Activated naive CD4-positive, alpha-beta T cell treated with anti-CD3 and anti-CD28 coated beads for 36 hours (primary cell): ENCODE measurements at regions of chr14 and their contacts with region 1.

Region 1: DNA sequence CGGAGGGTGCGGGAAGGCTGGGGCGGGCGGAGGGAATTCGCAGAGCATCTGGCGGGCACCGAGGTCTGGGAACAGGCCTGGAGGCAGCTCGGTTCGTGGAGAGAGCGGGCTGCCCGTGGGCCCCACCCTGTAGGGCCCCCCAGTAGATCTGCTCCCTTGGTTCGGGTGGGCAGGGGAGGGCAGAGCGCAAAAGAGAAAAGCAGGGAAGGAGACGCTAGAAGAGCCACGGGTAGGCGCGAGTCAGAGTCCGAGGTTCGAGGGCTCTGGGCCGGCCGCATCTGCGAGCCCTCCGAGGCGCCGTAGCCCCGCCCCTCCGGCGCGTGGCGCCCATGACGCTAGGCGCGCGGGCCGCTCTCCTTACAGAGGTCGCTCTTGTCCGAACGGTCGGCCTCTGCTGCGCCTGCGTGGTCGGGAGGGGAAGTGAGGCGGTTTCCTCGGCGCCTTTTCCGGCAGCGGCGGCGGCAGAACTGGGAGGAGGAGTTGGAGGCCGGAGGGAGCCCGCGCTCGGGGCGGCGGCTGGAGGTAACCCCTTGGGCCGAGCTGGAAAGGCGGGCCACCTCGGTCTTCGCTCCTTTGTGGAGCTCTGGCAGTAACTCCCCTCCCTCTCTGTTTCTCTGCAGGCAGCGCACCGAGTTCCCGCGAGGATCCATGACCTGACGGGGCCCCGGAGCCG is at the start of gene ARF6:
- DNase-seq: peak; percentile 98
- H3K4me3 Mint-ChIP-seq: peak within 1 kb of the TSS; percentile 100
- H3K27ac Mint-ChIP-seq: peak within 1 kb of the TSS; percentile 100
- H3K4me1 Mint-ChIP-seq: peaks cover 19% of the 10 kb centered on the region
- H3K27me3 Mint-ChIP-seq: no peaks in the 10 kb centered on the region
- total RNA-seq, gene ARF6: 128 to 129 TPM

Region 2: DNA sequence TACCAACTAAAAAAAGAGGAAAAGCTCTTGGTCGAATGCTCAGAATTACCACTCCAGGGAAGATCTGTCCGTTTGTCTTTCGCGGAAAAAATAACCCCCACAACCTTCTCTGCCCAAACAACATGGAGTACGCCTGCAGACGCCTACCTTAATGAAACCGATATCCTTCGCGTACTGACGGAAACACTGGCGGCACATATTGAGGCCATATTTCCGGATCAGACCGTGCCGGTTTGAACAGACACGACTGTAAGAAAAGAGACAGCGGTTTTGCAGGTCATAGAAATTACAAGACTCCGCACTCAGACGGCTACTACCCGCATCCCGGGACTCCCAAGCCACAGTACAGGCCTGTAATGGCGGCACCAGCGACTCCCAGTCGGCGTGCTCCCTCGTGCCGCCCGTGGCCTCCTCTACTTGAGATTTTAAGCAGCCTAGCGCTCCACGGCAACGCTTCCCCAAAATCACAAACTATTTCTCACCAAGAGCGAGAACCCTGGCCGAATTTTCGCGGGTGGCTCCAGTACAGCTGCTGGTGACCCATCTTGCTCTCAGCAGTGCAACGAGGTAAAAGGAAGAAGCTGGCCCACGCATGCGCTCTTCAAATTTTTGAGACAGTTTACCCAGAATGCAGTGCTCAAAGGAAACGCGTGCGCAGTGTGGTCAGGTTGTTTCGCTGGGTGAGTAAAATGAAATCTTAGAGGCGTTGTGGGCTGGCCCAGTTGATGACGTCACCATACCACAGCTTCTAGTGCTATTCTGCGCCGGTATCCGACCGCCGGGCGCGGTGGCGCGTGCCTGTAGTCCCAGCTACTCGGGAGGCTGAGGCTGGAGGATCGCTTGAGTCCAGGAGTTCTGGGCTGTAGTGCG is 306.7 kb before region 1 on chr14 and contains the start of gene RPS29:
- CTCF ChIA-PET with region 1: no interaction called
- intact Hi-C with region 1: loop called (anchors 1 kb)
- DNase-seq: peak; percentile 99
- H3K4me3 Mint-ChIP-seq: peak within 1 kb of the TSS; percentile 87
- H3K27ac Mint-ChIP-seq: peak within 1 kb of the TSS; percentile 98
- H3K4me1 Mint-ChIP-seq: peaks cover 40% of the 10 kb centered on the region
- H3K27me3 Mint-ChIP-seq: peaks cover 3% of the 10 kb centered on the region
- total RNA-seq, gene RPS29: 1,858 to 2,382 TPM

Region 3: DNA sequence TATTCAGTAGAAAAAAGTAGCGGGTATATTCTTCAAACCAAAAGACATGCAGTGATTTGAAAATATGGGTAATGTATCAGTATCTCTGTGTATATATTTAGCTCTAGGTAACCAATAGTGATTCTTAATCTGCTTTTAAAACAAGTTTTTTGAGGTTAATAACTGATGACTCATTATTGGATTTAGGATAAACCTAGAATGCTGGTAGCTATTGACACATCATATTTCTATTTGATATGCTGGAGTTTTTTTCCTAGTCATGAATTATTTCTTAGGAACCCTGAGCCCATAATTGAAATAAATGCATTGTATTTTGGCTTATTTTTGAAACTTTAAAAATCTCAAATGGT is 15.6 kb after region 1 on chr14:
- CTCF ChIA-PET with region 1: no interaction called
- intact Hi-C with region 1: loop called (anchors 2 kb)
- DNase-seq: no peak
- H3K4me3 Mint-ChIP-seq: no peak overlapping the region
- H3K27ac Mint-ChIP-seq: no peak overlapping the region
- H3K4me1 Mint-ChIP-seq: peaks cover 40% of the 10 kb centered on the region
- H3K27me3 Mint-ChIP-seq: no peaks in the 10 kb centered on the region

Region 4: DNA sequence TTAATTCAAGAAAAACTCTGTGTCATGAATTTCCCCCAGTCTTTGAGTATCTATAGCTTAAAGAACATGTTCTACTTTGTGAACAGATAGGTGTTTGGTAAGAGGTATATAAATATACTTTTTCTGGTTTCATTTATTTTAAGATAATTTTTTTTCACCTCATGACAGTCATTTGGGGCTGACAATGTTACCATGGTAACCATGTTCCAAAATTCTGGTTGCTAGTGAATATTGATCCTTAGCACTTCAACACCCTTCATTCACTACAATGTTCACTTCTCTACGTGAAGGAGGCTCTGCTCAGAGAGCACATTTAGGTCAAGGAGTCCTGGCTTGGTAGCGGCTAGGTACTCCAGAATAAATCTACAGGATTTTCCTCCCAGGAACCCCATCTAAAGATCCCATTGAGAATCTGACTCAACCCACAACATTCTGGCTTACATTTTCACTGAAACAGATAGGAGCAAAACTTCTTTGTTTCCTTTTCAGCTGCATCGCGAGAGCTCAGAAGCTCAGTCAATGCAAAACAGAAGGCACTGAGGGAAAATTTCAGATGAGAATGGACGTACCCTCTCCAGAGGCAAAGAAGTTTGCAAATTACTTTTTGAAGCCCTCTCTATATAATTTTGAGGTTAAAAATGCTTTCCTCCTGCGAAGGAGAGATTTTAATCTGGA is 93.7 kb after region 1 on chr14:
- CTCF ChIA-PET with region 1: no interaction called
- intact Hi-C with region 1: loop called (anchors 1 kb)
- DNase-seq: no peak
- H3K4me3 Mint-ChIP-seq: no peak overlapping the region
- H3K27ac Mint-ChIP-seq: peak overlapping the region; percentile 34
- H3K4me1 Mint-ChIP-seq: peaks cover 40% of the 10 kb centered on the region
- H3K27me3 Mint-ChIP-seq: no peaks in the 10 kb centered on the region

Region 5: DNA sequence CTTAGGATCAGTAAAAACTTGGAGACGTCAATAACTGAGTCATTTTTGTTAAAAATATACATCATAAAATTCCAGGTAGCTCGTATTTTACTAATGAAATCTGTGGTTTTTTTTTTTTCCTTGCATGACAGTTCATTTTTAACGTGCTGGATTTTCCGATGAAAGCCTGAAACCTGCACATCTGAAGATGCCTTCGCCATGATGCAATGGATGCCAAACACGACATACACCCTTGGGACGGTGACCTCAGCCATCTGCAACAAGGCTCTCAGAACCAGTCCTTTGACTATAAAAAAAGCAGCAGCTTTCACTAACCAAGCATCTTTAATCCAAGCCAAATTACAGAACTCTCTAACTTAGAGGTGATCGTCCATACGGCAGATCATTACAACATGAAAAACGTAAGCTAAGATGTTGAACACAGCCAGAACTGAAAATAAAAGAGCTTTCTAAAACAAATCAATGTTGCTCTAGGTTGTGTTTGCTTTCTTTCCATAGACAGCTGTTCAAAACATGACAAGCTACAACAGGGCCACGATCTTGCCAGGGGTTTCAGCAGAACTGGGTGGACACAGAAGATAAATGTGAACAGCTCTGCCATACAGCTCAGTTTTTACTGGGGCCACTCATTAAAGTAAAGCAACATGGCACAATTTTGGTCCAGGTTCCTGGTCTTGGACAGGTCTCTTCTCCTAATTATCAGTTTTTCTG is 930.4 kb after region 1 on chr14:
- CTCF ChIA-PET with region 1: no interaction called
- intact Hi-C with region 1: loop called (anchors 10 kb)
- DNase-seq: peak; percentile 30
- H3K4me3 Mint-ChIP-seq: peak overlapping the region; percentile 59
- H3K27ac Mint-ChIP-seq: peak overlapping the region; percentile 73
- H3K4me1 Mint-ChIP-seq: peaks cover 89% of the 10 kb centered on the region
- H3K27me3 Mint-ChIP-seq: no peaks in the 10 kb centered on the region